Left colon (tissue), 2 donors: ENCODE measurements at regions of chr6 and their contacts with region 1.

Region 1: GRCh38 chr6:57172136-57173055 is at the start of gene BAG2:
- DNase-seq: peak; percentile 87 to 88
- ATAC-seq: peak; percentile 91
- total RNA-seq, gene BAG2: 0.58 to 5.2 TPM

Region 2: DNA sequence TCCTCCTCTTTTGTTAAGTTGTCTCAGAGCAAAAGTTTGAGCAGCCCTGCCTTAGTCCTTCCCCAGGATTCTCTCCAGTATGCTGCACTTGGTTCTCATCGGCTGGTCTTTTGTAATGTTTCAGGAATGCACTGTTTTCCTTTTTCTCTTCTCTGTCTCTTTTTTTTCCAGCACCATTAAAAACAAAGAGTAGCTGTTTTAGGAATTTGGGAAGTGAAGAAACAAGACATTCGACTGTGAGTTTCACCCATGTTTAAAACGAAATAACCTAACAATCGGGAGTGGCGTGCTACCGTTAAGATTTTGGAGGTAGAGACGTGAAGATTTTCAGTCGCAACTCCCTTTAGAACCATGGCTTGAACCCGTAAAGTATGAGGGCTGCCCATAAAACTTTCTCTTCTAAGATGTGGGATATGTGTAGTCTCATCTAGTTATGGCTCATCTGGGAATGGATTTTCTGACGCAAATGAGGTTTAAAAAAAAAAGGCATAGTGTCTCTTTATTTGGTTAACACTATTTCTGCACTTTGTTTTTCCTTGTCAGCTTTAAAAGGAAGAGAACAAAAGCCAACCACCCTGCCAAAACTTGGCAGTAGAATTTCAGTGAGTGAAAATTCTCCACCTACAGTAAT is 85.6 kb after region 1 on chr6:
- intact Hi-C with region 1: loop called in 1 of 2 experiments (anchors 10 kb)
- DNase-seq: no peak
- ATAC-seq: no peak